ENCODE measurements at regions of chr11 and their contacts with region 1.

Region 1: DNA sequence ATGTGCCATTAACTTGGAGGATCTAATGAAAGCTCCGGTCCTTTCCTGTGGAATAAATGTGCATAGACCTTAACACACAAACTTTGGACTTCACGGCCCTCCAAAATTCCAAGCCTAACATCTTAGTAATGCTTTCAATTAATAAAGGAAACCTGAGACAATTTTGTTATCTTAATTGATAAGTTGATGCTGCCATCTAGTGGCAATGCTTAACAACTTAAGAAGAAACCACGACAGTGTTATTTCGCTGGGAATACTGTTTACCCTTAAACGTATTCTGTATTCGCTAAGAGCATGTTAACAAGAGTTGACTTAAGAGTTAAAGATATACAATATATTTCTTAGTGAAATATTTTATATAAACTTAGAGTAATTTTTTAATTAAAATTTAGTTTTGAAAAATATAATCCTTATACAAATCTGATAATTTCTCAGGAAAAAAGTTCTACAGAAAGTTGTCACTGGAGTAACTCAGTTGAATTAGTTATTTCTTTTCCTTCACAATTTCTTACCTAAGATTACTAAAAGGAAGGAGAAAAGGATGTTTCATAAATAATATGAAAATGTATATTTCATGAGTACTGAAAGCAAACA is 35.0 kb upstream of the OR9G4 start:
- DNase-seq: no peak
- H3K4me3 Mint-ChIP-seq: no peak overlapping the region
- H3K27ac Mint-ChIP-seq: no peak overlapping the region
- H3K4me1 Mint-ChIP-seq: no peaks in the 10 kb centered on the region
- H3K27me3 Mint-ChIP-seq: no peaks in the 10 kb centered on the region

Region 2: GRCh38 chr11:56271092-56271491 is 512.5 kb before region 1 on chr11:
- CTCF ChIA-PET with region 1: no interaction called
- POLR2A ChIA-PET with region 1: no interaction called
- intact Hi-C with region 1: no loop called
- DNase-seq: no peak
- H3K4me3 Mint-ChIP-seq: no peak overlapping the region
- H3K27ac Mint-ChIP-seq: no peak overlapping the region
- H3K4me1 Mint-ChIP-seq: no peaks in the 10 kb centered on the region
- H3K27me3 Mint-ChIP-seq: no peaks in the 10 kb centered on the region

Region 3: GRCh38 chr11:56624661-56625110 is 158.9 kb before region 1 on chr11:
- CTCF ChIA-PET with region 1: no interaction called
- POLR2A ChIA-PET with region 1: no interaction called
- intact Hi-C with region 1: loop called (anchors 1 kb)
- DNase-seq: no peak
- H3K4me3 Mint-ChIP-seq: no peak overlapping the region
- H3K27ac Mint-ChIP-seq: no peak overlapping the region
- H3K4me1 Mint-ChIP-seq: no peaks in the 10 kb centered on the region
- H3K27me3 Mint-ChIP-seq: no peaks in the 10 kb centered on the region

Region 4: GRCh38 chr11:57085611-57086010 is 302.1 kb after region 1 on chr11:
- CTCF ChIA-PET with region 1: no interaction called
- POLR2A ChIA-PET with region 1: no interaction called
- intact Hi-C with region 1: no loop called
- DNase-seq: no peak
- H3K4me3 Mint-ChIP-seq: no peak overlapping the region
- H3K27ac Mint-ChIP-seq: no peak overlapping the region
- H3K4me1 Mint-ChIP-seq: no peaks in the 10 kb centered on the region
- H3K27me3 Mint-ChIP-seq: peaks cover 2% of the 10 kb centered on the region